ENCODE measurements at regions of chr13 and their contacts with region 1.

Region 1: DNA sequence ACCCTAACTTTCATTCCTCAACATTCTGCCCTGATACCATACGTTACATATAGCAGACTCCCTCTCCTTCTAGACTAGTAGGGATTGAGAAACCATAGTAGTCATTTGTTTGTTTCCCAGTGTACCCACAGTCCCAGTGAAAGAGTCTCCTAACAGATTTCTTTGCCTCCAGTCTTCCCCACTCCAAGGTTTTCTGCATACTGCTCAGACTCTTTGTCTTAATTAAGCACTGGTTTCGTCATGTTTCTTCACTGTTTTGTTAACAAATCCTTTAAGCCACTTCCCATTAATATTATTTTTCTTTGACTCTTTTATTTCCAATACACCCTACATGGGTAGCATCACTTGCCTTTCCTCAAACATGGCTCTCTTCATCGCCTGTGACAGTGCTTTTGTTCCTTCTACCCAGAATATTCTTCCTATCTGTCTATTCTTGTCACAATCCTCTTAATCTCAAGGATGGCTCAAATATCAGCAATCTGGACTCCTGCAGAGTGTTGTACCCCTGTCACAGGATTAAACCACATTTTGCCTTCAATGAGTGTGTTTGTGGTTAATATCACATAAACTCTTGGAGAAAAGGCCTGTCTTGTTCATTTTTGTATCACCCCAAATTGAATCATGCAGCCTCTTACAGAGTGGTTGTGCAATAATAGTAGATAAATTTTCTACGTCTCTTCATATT is 92.7 kb upstream of the KLF12 start:
- DNase-seq: no peak
- ATAC-seq: no peak
- H3K4me3 ChIP-seq: no peak overlapping the region
- H3K27ac ChIP-seq: peak overlapping the region; percentile 93
- H3K4me1 ChIP-seq: peaks cover 38% of the 10 kb centered on the region
- H3K27me3 ChIP-seq: no peaks in the 10 kb centered on the region
- CTCF ChIP-seq: no peak
- EP300 ChIP-seq: no peak
- POLR2A ChIP-seq: no peak
- RAD21 ChIP-seq: no peak

Region 2: DNA sequence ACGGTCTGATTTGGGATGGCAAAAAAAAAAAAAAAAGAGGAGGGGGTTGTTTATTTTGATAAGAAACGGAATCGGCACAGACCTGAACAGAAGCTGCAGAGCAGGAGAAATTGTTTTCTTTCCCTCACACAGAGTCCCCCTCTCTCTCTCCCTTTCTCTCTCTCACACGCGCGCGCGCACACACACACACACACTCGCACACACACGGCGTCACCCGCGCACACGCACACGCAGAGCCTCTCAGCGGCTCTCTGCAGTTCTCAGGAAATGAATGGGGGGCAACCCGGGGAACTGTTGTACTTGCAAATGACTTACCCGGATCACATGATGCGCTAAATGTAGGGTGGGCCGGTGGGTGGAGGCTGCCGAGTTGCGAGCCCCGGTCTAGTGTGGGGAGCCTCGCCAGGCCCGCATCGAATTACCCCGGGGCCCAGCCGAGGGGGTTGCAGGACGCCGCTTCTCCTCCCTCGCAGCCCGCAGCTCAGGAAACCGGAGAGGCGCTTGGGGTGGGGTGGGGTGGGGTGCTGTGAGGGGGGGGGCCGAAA is 93.2 kb before region 1 on chr13:
- CTCF ChIA-PET with region 1: no interaction called
- POLR2A ChIA-PET with region 1: no interaction called
- in situ Hi-C with region 1: no loop called
- intact Hi-C with region 1: loop called (anchors 5 kb)
- DNase-seq: peak; percentile 35
- ATAC-seq: peak; percentile 45
- H3K4me3 ChIP-seq: peak overlapping the region; percentile 59 to 72 (median 64)
- H3K27ac ChIP-seq: peak overlapping the region; percentile 33
- H3K4me1 ChIP-seq: peaks cover 52% of the 10 kb centered on the region
- H3K27me3 ChIP-seq: peaks cover 0 to 31% of the 10 kb centered on the region in 2 experiments; a peak in 1 of 5 replicates
- CTCF ChIP-seq: no peak
- EP300 ChIP-seq: no peak
- POLR2A ChIP-seq: no peak
- RAD21 ChIP-seq: no peak

Region 3: GRCh38 chr13:74168263-74168675 is 58.7 kb before region 1 on chr13:
- CTCF ChIA-PET with region 1: no interaction called
- POLR2A ChIA-PET with region 1: no interaction called
- in situ Hi-C with region 1: no loop called
- intact Hi-C with region 1: loop called (anchors 5 kb)
- DNase-seq: peak; percentile 35
- ATAC-seq: peak; percentile 95
- H3K4me3 ChIP-seq: peak overlapping the region in 1 of 3 experiments; percentile 7; a peak in 2 of 6 replicates
- H3K27ac ChIP-seq: peak overlapping the region; percentile 12
- H3K4me1 ChIP-seq: peaks cover 15% of the 10 kb centered on the region
- H3K27me3 ChIP-seq: peaks cover 0 to 2% of the 10 kb centered on the region in 2 experiments; a peak in 1 of 5 replicates
- CTCF ChIP-seq: no peak
- EP300 ChIP-seq: peak in 1 of 2 experiments; percentile 48; a peak in 1 of 4 replicates
- POLR2A ChIP-seq: no peak
- RAD21 ChIP-seq: no peak

Measured in HepG2 (cell line).